B cell (primary cell): ENCODE measurements at regions of chr16 and their contacts with region 1.

Region 1: DNA sequence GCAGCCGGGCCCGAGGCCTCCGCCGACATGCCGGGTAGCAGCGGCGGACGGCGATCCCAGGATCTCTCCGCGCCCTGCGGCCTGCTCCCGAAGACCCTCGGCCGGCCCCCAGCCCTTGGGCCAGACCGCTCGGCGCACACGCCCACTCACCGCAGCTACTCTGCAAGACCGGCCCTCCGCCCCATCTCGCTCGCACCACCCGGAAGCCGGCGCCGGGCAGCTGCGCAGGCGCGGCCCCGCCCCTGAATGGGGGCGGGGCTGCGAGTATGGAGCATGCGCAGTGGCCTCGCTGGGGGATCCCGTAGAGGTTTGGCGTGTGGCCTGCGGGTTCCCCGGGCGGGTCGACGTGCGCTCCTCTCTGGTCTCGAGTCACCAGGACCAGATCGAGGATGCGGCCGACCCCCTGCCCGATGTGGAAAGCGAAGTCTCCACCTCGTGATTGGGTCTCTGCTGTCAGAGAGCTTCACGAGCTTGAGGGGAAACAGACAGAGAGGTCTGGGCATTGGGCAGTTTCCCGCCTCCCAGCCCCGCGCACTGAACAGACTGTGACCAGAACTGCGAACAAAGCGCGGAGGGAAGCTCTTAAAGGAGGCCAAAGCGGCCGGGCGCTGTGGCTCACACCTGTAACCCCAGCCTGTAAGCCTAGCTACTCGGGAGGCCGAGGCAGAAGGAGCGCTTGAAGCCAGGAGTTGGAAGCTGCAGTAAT is at the start of gene KCTD13:
- DNase-seq: peak; percentile 94
- ATAC-seq: peak; percentile 91
- H3K4me3 ChIP-seq: peak within 1 kb of the TSS; percentile 48 to 95 (median 84)
- H3K4me3 Mint-ChIP-seq: peak within 1 kb of the TSS; percentile 91
- H3K27ac ChIP-seq: peak within 1 kb of the TSS; percentile 80 to 84
- H3K27ac Mint-ChIP-seq: peak within 1 kb of the TSS; percentile 96
- H3K4me1 ChIP-seq: peaks cover 14 to 21% of the 10 kb centered on the region in 2 donors
- H3K4me1 Mint-ChIP-seq: peaks cover 25% of the 10 kb centered on the region
- H3K27me3 ChIP-seq: no peaks in the 10 kb centered on the region
- H3K27me3 Mint-ChIP-seq: no peaks in the 10 kb centered on the region
- CTCF ChIP-seq: no peak
- total RNA-seq, gene KCTD13: 74.3 and 83.9 TPM in 2 replicates

Region 2: GRCh38 chr16:29900102-29900887 is 25.9 kb before region 1 on chr16 and contains the start of gene ASPHD1:
- CTCF ChIA-PET with region 1: no interaction called
- POLR2A ChIA-PET with region 1: no interaction called
- intact Hi-C with region 1: loop called (anchors 1 kb)
- DNase-seq: peak; percentile 83
- ATAC-seq: peak; percentile 83
- H3K4me3 ChIP-seq: peak within 1 kb of the TSS in 4 of 5 experiments; percentile 29 to 62 (median 50)
- H3K4me3 Mint-ChIP-seq: peak within 1 kb of the TSS; percentile 62
- H3K27ac ChIP-seq: no peak within 1 kb of the TSS
- H3K27ac Mint-ChIP-seq: no peak within 1 kb of the TSS
- H3K4me1 ChIP-seq: peaks cover 15 to 22% of the 10 kb centered on the region in 2 donors
- H3K4me1 Mint-ChIP-seq: peaks cover 3% of the 10 kb centered on the region
- H3K27me3 ChIP-seq: peaks cover 0 to 48% (median 25%) of the 10 kb centered on the region in 4 experiments
- H3K27me3 Mint-ChIP-seq: peaks cover 32% of the 10 kb centered on the region
- CTCF ChIP-seq: no peak
- total RNA-seq, gene ASPHD1: not detected in 2 replicates

Region 3: GRCh38 chr16:29973384-29974246 is 47.5 kb after region 1 on chr16 and contains the start of gene TAOK2:
- CTCF ChIA-PET with region 1: interaction called, 5 read pairs
- POLR2A ChIA-PET with region 1: interaction called, 7 read pairs
- intact Hi-C with region 1: loop called (anchors 1 kb)
- DNase-seq: peak; percentile 98
- ATAC-seq: peak; percentile 99
- H3K4me3 ChIP-seq: peak within 1 kb of the TSS; percentile 79 to 100 (median 99)
- H3K4me3 Mint-ChIP-seq: peak within 1 kb of the TSS; percentile 95
- H3K27ac ChIP-seq: peak within 1 kb of the TSS; percentile 73 to 79
- H3K27ac Mint-ChIP-seq: peak within 1 kb of the TSS; percentile 94
- H3K4me1 ChIP-seq: peaks cover 31 to 38% of the 10 kb centered on the region in 2 donors
- H3K4me1 Mint-ChIP-seq: peaks cover 36% of the 10 kb centered on the region
- H3K27me3 ChIP-seq: no peaks in the 10 kb centered on the region
- H3K27me3 Mint-ChIP-seq: no peaks in the 10 kb centered on the region
- CTCF ChIP-seq: no peak
- total RNA-seq, gene TAOK2: 50.8 and 51.9 TPM in 2 replicates

Region 4: GRCh38 chr16:30005341-30006094 is 79.4 kb after region 1 on chr16:
- CTCF ChIA-PET with region 1: interaction called, 3 read pairs
- POLR2A ChIA-PET with region 1: no interaction called
- intact Hi-C with region 1: loop called (anchors 2 kb)
- DNase-seq: peak; percentile 62
- ATAC-seq: peak; percentile 74
- H3K4me3 ChIP-seq: no peak overlapping the region
- H3K4me3 Mint-ChIP-seq: no peak overlapping the region
- H3K27ac ChIP-seq: no peak overlapping the region
- H3K27ac Mint-ChIP-seq: no peak overlapping the region
- H3K4me1 ChIP-seq: peaks cover 10 to 19% of the 10 kb centered on the region in 2 donors
- H3K4me1 Mint-ChIP-seq: peaks cover 10% of the 10 kb centered on the region
- H3K27me3 ChIP-seq: peaks cover 0 to 14% (median 4%) of the 10 kb centered on the region in 4 experiments
- H3K27me3 Mint-ChIP-seq: peaks cover 12% of the 10 kb centered on the region
- CTCF ChIP-seq: peak; percentile 80